ENCODE measurements at regions of chr21 and their contacts with region 1.

Region 1: GRCh38 chr21:38289705-38290485 is 33.1 kb downstream of the KCNJ15 start:
- DNase-seq: peak; percentile 99
- H3K4me3 ChIP-seq: no peak overlapping the region
- H3K27ac ChIP-seq: peak overlapping the region; percentile 93
- H3K4me1 ChIP-seq: peaks cover 48% of the 10 kb centered on the region
- H3K27me3 ChIP-seq: no peaks in the 10 kb centered on the region
- CTCF ChIP-seq: no peak

Region 2: GRCh38 chr21:38244885-38245545 is 44.9 kb before region 1 on chr21:
- CTCF ChIA-PET with region 1: no interaction called
- dilution Hi-C with region 1: no loop called
- in situ Hi-C with region 1: no loop called
- intact Hi-C with region 1: loop called (anchors 2 kb)
- DNase-seq: peak; percentile 99
- H3K4me3 ChIP-seq: no peak overlapping the region
- H3K27ac ChIP-seq: peak overlapping the region; percentile 77
- H3K4me1 ChIP-seq: peaks cover 29% of the 10 kb centered on the region
- H3K27me3 ChIP-seq: no peaks in the 10 kb centered on the region
- CTCF ChIP-seq: no peak

Region 3: GRCh38 chr21:38267991-38268863 is 21.7 kb before region 1 on chr21:
- CTCF ChIA-PET with region 1: no interaction called
- dilution Hi-C with region 1: no loop called
- in situ Hi-C with region 1: no loop called
- intact Hi-C with region 1: loop called (anchors 1 kb)
- DNase-seq: peak; percentile 76
- H3K4me3 ChIP-seq: peak overlapping the region in 1 of 3 experiments; percentile 8
- H3K27ac ChIP-seq: peak overlapping the region; percentile 74
- H3K4me1 ChIP-seq: peaks cover 60% of the 10 kb centered on the region
- H3K27me3 ChIP-seq: no peaks in the 10 kb centered on the region
- CTCF ChIP-seq: no peak

Region 4: DNA sequence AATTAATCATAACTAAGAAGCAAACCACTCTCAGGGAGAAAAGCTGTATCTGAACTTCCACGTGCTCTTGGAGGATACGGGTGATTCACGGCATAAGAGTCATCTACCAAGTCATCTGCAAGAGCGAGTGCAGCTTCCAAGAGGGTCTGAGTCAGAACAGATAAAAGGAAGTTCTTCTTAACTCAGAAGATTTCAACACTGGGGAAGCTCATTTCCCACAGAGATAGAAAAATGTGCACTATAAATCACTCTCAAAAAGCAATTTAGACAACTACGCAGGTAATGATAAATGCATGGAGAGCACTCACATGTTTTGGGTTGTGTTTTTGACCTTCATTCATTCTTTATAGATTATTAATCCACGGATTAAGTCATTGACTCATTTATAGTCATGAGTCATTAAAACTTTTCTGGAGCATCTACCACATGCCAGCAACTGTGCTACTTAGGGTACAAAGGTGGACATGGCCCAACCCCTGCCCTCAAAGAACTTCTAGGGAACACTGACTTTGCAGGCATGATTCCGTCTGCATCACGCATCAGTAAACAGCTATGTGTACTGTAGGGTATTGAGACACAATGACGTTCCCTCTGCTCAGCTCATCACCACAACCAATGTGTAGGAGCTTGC is 12.3 kb before region 1 on chr21:
- CTCF ChIA-PET with region 1: no interaction called
- dilution Hi-C with region 1: no loop called
- in situ Hi-C with region 1: no loop called
- intact Hi-C with region 1: loop called (anchors 1 kb)
- DNase-seq: peak; percentile 99
- H3K4me3 ChIP-seq: no peak overlapping the region
- H3K27ac ChIP-seq: peak overlapping the region; percentile 91
- H3K4me1 ChIP-seq: peaks cover 37% of the 10 kb centered on the region
- H3K27me3 ChIP-seq: no peaks in the 10 kb centered on the region
- CTCF ChIP-seq: no peak